Activated CD4-positive, alpha-beta T cell treated with anti-CD3 and anti-CD28 coated beads for 36 hours (primary cell): ENCODE measurements at regions of chr6 and their contacts with region 1.

Region 1: DNA sequence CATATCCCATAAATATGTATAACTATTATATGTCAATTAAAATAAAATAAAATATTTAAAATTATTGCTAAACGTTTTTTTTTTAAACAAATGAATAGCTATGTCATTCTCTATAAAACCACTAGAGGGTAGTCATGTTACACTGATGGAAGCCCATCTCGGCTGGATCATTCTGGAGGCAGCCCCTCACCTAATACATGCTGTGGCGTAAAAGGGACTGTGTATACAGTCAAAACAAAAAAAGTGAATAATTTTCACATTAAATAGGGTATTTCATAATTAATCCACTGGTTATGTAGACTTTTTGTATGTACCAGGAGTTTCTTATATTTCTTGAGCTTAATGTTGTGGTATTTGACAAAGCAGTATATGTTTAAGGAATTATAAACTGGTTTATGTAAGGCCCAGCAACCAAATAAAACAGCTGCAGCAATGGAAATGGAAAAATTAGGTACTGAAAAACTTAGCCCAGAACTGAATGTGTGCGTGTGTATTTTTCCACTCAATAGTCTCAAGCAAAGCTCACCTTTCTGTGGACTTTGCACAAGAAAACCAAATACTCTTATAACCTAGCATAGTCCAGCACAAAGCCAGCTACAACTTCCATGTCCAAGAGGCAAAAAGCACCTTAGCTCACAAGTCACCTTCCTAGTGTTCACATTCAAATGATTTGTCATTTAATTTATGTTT is 81.7 kb downstream of the COL9A1 start:
- DNase-seq: peak; percentile 20
- ATAC-seq: peak; percentile 55
- H3K4me3 Mint-ChIP-seq: no peak overlapping the region
- H3K27ac Mint-ChIP-seq: no peak overlapping the region
- H3K4me1 Mint-ChIP-seq: no peaks in the 10 kb centered on the region
- H3K27me3 Mint-ChIP-seq: peaks cover 5% of the 10 kb centered on the region

Region 2: GRCh38 chr6:70210462-70210861 is 10.7 kb before region 1 on chr6:
- CTCF ChIA-PET with region 1: interaction called, 16 read pairs
- POLR2A ChIA-PET with region 1: no interaction called
- intact Hi-C with region 1: no loop called
- DNase-seq: no peak
- ATAC-seq: no peak
- H3K4me3 Mint-ChIP-seq: no peak overlapping the region
- H3K27ac Mint-ChIP-seq: no peak overlapping the region
- H3K4me1 Mint-ChIP-seq: no peaks in the 10 kb centered on the region
- H3K27me3 Mint-ChIP-seq: peaks cover 2% of the 10 kb centered on the region

Region 3: DNA sequence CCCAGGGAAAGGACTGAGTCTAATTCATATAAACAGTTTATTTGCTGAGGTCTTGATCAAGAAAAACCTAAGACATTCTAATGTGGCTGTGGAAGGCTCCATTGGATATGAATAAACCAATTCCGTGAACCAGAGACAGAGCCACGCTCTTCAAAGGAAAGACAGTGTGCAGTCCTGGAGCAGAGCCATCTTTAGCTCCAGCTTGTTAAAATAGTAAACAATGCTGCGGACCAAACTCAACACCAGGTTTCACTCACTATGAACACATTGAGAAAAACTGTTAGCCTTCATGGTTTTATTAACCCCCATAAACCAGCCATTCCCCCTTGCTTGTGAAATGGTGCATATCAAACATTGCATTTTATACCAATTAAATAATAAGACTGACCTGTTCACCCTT is 19.9 kb after region 1 on chr6:
- CTCF ChIA-PET with region 1: interaction called, 10 read pairs
- POLR2A ChIA-PET with region 1: no interaction called
- intact Hi-C with region 1: no loop called
- DNase-seq: no peak
- ATAC-seq: no peak
- H3K4me3 Mint-ChIP-seq: no peak overlapping the region
- H3K27ac Mint-ChIP-seq: no peak overlapping the region
- H3K4me1 Mint-ChIP-seq: no peaks in the 10 kb centered on the region
- H3K27me3 Mint-ChIP-seq: peaks cover 7% of the 10 kb centered on the region

Region 4: DNA sequence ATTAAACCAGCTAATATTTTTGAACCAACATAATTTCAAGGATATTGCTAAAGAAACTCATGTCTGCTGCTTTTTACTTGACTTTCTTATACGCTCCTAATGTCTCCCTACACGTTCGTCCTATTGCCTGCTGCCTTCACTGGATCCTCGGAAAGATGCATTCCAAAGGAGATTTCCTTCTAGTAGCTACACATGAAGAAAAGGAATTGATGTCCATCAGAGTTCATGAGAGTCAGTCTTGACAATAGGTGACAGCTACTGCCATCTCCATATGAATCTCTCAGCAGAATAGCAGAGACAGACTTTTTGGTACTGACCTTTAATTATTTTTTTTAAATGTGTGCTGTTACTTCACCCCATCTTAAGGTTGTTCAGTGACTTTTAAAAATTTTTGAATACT is 105.9 kb after region 1 on chr6:
- CTCF ChIA-PET with region 1: no interaction called
- POLR2A ChIA-PET with region 1: no interaction called
- intact Hi-C with region 1: no loop called
- DNase-seq: no peak
- ATAC-seq: no peak
- H3K4me3 Mint-ChIP-seq: no peak overlapping the region
- H3K27ac Mint-ChIP-seq: no peak overlapping the region
- H3K4me1 Mint-ChIP-seq: no peaks in the 10 kb centered on the region
- H3K27me3 Mint-ChIP-seq: peaks cover 3% of the 10 kb centered on the region

Region 5: GRCh38 chr6:70369332-70369950 is 148.3 kb after region 1 on chr6:
- CTCF ChIA-PET with region 1: interaction called, 59 read pairs
- POLR2A ChIA-PET with region 1: no interaction called
- intact Hi-C with region 1: loop called (anchors 1 kb)
- DNase-seq: peak; percentile 79
- ATAC-seq: peak; percentile 84
- H3K4me3 Mint-ChIP-seq: no peak overlapping the region
- H3K27ac Mint-ChIP-seq: no peak overlapping the region
- H3K4me1 Mint-ChIP-seq: no peaks in the 10 kb centered on the region
- H3K27me3 Mint-ChIP-seq: peaks cover 12% of the 10 kb centered on the region

Region 6: GRCh38 chr6:70884074-70884983 is 663.2 kb after region 1 on chr6:
- CTCF ChIA-PET with region 1: interaction called, 9 read pairs
- POLR2A ChIA-PET with region 1: no interaction called
- intact Hi-C with region 1: loop called (anchors 1 to 5 kb)
- DNase-seq: peak; percentile 73
- ATAC-seq: peak; percentile 90
- H3K4me3 Mint-ChIP-seq: no peak overlapping the region
- H3K27ac Mint-ChIP-seq: no peak overlapping the region
- H3K4me1 Mint-ChIP-seq: no peaks in the 10 kb centered on the region
- H3K27me3 Mint-ChIP-seq: peaks cover 7% of the 10 kb centered on the region

Region 7: DNA sequence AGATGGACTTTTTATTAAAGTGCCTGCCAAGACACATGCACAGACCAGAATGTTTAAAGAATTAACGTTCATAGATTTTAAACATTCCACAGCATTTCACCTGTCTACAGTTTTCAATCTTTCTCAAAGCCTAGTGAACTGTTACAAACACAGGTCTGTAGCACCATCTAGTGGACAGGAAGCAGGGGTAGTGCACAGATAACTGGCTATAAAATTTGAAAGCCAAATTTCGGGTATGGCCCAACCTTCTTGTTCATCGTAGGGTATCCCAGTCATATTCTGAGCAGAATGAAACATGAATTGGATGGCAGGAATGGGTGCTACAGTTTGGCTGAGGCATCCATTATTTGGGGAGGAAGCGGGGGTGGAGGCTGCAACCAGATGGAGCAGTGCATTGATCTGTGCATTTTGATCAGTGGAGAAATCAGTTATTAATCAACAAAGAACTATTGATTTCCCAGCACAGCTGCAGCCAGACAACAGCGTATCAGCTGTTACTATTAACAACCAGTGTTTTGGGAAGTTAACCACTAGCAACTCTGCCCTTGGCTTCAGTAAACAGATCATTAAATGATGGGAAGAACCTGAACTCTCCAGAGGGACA is 791.8 kb after region 1 on chr6:
- CTCF ChIA-PET with region 1: interaction called, 3 read pairs
- POLR2A ChIA-PET with region 1: no interaction called
- intact Hi-C with region 1: loop called (anchors 5 kb)
- DNase-seq: peak; percentile 13
- ATAC-seq: peak; percentile 76
- H3K4me3 Mint-ChIP-seq: no peak overlapping the region
- H3K27ac Mint-ChIP-seq: no peak overlapping the region
- H3K4me1 Mint-ChIP-seq: no peaks in the 10 kb centered on the region
- H3K27me3 Mint-ChIP-seq: peaks cover 10% of the 10 kb centered on the region